Activated T-helper 1 cell treated with anti-CD3 and anti-CD28 coated beads, Interleukin-12 subunit alpha, Interleukin-12 subunit beta, Interleukin-2, Interleukin-4 antibody, amounts not matched to agents 30 ng/mL and 10 ng/mL and 1 ng/mL, durations not matched to agents 14 hours and 24 hours and 36 hours (primary cell): ENCODE measurements at regions of chr20 and their contacts with region 1.

Region 1: DNA sequence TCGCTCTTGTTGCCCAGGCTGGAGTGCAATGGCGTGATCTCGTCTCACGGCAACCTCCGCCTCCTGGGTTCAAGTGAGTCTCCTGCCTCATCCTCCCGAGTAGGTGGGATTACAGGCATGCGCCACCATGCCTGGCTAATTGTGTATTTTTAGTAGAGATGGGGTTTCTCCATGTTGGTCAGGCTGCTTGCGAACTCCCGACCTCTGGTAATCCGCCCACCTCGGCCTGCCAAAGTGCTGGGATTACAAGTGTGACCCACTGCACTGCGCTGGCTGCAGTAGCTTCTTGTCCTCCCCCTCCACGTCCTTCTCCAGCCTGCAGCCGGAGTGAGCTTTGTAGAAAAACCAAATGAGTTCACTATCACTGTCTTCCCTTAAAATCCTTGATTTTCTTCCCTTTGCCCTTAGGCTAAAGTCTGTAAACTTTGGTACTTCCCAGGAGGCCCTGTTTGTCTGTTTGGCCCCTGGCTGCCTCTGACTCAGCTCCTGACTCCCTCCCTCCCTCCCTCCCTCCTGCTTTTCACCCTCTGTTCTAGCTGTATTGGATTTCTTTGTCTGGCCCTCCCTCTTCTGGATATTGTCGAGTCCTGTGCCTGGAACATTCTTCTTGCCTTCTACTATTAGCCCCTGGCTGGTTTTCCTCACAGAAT is 12.9 kb downstream of the PARD6B start:
- DNase-seq: no peak
- H3K4me3 Mint-ChIP-seq: no peak overlapping the region
- H3K27ac Mint-ChIP-seq: peak overlapping the region; percentile 37
- H3K4me1 Mint-ChIP-seq: peaks cover 35% of the 10 kb centered on the region
- H3K27me3 Mint-ChIP-seq: no peaks in the 10 kb centered on the region

Region 2: GRCh38 chr20:50484276-50484976 is 259.8 kb before region 1 on chr20:
- intact Hi-C with region 1: loop called (anchors 10 kb)
- DNase-seq: no peak
- H3K4me3 Mint-ChIP-seq: peak overlapping the region; percentile 89
- H3K27ac Mint-ChIP-seq: peak overlapping the region; percentile 95
- H3K4me1 Mint-ChIP-seq: peaks cover 37% of the 10 kb centered on the region
- H3K27me3 Mint-ChIP-seq: peaks cover 2% of the 10 kb centered on the region

Region 3: DNA sequence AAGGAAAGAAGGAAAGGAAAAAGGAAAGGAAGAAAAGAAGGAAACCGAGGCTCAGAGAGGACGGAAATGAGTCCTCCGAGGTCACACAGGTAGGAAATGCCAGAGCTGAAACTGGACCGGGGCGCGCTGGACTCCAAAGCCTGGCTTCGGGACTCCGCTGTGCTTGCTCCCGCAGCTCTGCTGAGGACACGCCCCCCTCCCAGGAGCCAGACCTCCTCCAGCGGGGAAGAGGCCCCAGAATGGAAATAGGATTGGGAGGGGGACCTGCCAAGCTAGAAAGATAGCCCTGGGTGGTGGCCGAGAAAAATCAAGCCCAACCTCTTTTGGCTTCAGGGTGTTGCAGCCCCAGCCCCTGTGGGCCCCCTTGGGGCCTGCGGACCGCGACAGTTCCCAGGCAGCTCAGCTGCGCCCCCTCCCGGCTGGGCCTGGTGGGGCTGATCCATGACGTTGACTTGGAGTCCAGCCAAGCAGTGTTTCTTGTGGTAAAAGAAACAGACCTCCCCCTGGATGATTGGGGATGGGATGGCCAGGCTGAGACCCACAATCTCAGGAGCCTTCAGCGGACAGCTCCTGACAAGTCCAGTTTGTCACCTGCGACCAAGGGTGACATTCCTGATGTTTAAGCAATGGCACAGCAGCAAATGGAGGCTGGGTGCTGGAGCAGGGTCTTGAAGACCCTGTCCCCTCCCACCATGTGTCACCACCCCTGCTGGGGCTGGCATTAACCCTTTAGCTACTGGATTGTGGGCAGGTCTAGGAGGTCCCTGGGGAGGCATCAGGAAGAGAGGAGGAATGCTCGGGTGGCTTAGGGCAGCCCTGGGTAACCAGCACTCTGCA is 108.4 kb before region 1 on chr20:
- intact Hi-C with region 1: loop called (anchors 10 kb)
- DNase-seq: peak; percentile 26
- H3K4me3 Mint-ChIP-seq: no peak overlapping the region
- H3K27ac Mint-ChIP-seq: no peak overlapping the region
- H3K4me1 Mint-ChIP-seq: no peaks in the 10 kb centered on the region
- H3K27me3 Mint-ChIP-seq: no peaks in the 10 kb centered on the region

Region 4: GRCh38 chr20:50724851-50725721 is 19.2 kb before region 1 on chr20:
- intact Hi-C with region 1: loop called (anchors 1 kb)
- DNase-seq: no peak
- H3K4me3 Mint-ChIP-seq: no peak overlapping the region
- H3K27ac Mint-ChIP-seq: no peak overlapping the region
- H3K4me1 Mint-ChIP-seq: peaks cover 12% of the 10 kb centered on the region
- H3K27me3 Mint-ChIP-seq: peaks cover 1% of the 10 kb centered on the region